HepG2 (cell line): ENCODE measurements at regions of chr15 and their contacts with region 1.

Region 1: GRCh38 chr15:94324117-94324826 is 92.9 kb downstream of the MCTP2 start:
- DNase-seq: peak; percentile 34
- ATAC-seq: peak; percentile 95
- H3K4me3 ChIP-seq: no peak overlapping the region
- H3K27ac ChIP-seq: no peak overlapping the region
- H3K4me1 ChIP-seq: no peaks in the 10 kb centered on the region; the same call in 1 of the 2 replicates
- H3K27me3 ChIP-seq: no peaks in the 10 kb centered on the region
- CTCF ChIP-seq: peak; percentile 93
- EP300 ChIP-seq: no peak
- POLR2A ChIP-seq: no peak
- RAD21 ChIP-seq: peak; percentile 89

Region 2: GRCh38 chr15:93030430-93031105 is 1293.7 kb before region 1 on chr15:
- CTCF ChIA-PET with region 1: no interaction called
- POLR2A ChIA-PET with region 1: no interaction called
- in situ Hi-C with region 1: no loop called
- intact Hi-C with region 1: loop called (anchors 2 kb)
- DNase-seq: peak; percentile 50
- ATAC-seq: peak; percentile 81
- H3K4me3 ChIP-seq: peak overlapping the region in 2 of 3 experiments; percentile 17 to 67; a peak in 2 of 6 replicates
- H3K27ac ChIP-seq: no peak overlapping the region
- H3K4me1 ChIP-seq: peaks cover 21% of the 10 kb centered on the region
- H3K27me3 ChIP-seq: 0 out of 5 replicates have a peak, but pooled peaks cover 0 to 8% of the 10 kb centered on the region in 2 experiments
- CTCF ChIP-seq: peak; percentile 90
- EP300 ChIP-seq: no peak
- POLR2A ChIP-seq: no peak
- RAD21 ChIP-seq: peak; percentile 81

Region 3: DNA sequence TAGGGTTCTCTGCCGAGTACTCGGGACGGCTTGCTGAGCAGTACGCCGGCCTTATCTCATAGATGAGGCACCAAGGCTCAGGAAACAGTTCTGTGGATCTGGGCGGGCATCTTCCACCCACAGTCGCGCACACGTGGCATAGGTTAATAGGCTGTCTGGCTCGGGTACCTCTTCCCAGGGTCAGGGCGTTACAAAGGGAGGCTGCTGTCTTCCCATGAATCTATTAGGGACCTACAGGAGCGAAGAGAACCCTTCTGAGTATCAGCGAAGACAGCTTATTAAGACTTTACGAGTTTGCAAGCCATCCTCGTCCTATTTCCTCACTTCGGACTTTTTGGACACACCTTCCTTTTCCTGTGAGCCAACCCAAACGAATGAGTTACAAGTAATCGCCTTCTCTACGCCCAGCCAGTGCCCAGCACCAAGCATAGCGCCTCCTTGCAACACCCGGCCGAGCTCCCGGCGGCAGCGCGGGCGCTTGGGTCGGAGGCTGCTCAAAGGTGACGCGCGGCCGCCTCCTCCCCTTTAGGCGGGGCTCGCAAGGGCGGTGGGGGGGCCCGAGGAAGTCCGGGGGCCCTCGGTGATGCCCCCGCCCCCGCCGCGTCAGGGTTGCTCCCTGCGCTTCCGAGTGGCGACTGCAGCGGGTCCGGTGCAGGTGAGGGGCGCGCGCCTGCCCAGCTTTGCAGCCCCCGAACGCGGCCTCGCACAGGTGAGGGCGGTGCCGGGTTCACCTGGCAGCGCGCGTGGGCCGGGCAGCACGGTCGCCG is 93.1 kb before region 1 on chr15 and contains the start of gene MCTP2:
- CTCF ChIA-PET with region 1: no interaction called
- POLR2A ChIA-PET with region 1: no interaction called
- in situ Hi-C with region 1: no loop called
- intact Hi-C with region 1: loop called (anchors 2 kb)
- DNase-seq: peak; percentile 62
- ATAC-seq: peak; percentile 96
- H3K4me3 ChIP-seq: peak within 1 kb of the TSS; percentile 68 to 74 (median 69)
- H3K27ac ChIP-seq: peak within 1 kb of the TSS; percentile 24
- H3K4me1 ChIP-seq: peaks cover 6% of the 10 kb centered on the region; the same call in 1 of the 2 replicates
- H3K27me3 ChIP-seq: no peaks in the 10 kb centered on the region; a peak in 1 of 5 replicates
- CTCF ChIP-seq: peak; percentile 41
- EP300 ChIP-seq: no peak
- POLR2A ChIP-seq: peak; percentile 17 to 52; a peak in 2 of 4 replicates
- RAD21 ChIP-seq: no peak
- total RNA-seq, gene MCTP2: 2.7 and 5.1 TPM in 2 replicates

Region 4: GRCh38 chr15:94336817-94337467 is 12.7 kb after region 1 on chr15:
- CTCF ChIA-PET with region 1: no interaction called
- POLR2A ChIA-PET with region 1: no interaction called
- in situ Hi-C with region 1: no loop called
- intact Hi-C with region 1: loop called (anchors 1 kb)
- DNase-seq: peak; percentile 86
- ATAC-seq: peak; percentile 96
- H3K4me3 ChIP-seq: no peak overlapping the region
- H3K27ac ChIP-seq: no peak overlapping the region
- H3K4me1 ChIP-seq: peaks cover 19% of the 10 kb centered on the region
- H3K27me3 ChIP-seq: no peaks in the 10 kb centered on the region; a peak in 1 of 5 replicates
- CTCF ChIP-seq: no peak
- EP300 ChIP-seq: peak in 1 of 2 experiments; percentile 39; a peak in 1 of 4 replicates
- POLR2A ChIP-seq: no peak
- RAD21 ChIP-seq: no peak

Region 5: DNA sequence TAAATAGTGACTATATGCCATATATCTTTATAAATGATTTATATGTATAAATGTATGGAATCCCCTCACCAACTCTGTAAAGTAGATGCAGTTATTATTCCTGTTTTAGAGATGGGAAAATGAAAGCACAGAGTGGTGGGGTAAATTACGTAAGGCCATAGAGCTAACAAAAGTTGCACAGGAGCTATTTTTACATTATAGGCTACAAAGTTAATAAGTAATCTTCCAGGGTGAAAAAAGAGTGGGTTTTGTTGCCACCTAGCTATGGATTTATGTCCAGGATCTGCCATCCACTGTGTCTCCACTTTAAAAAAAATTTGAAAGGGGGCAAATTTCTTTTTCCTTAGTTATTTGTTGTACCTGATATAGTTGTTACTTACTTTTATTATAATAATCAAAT is 142.8 kb after region 1 on chr15:
- CTCF ChIA-PET with region 1: no interaction called
- POLR2A ChIA-PET with region 1: no interaction called
- in situ Hi-C with region 1: no loop called
- intact Hi-C with region 1: loop called (anchors 1 kb)
- DNase-seq: peak; percentile 61
- ATAC-seq: peak; percentile 68
- H3K4me3 ChIP-seq: no peak overlapping the region; a peak in 1 of 6 replicates
- H3K27ac ChIP-seq: no peak overlapping the region
- H3K4me1 ChIP-seq: no peaks in the 10 kb centered on the region
- H3K27me3 ChIP-seq: no peaks in the 10 kb centered on the region
- CTCF ChIP-seq: peak; percentile 29; the same call in 1 of the 2 replicates
- EP300 ChIP-seq: no peak
- POLR2A ChIP-seq: no peak
- RAD21 ChIP-seq: no peak

Region 6: GRCh38 chr15:94761574-94761973 is 437.3 kb after region 1 on chr15:
- CTCF ChIA-PET with region 1: no interaction called
- POLR2A ChIA-PET with region 1: no interaction called
- in situ Hi-C with region 1: no loop called
- intact Hi-C with region 1: no loop called
- DNase-seq: no peak
- ATAC-seq: no peak
- H3K4me3 ChIP-seq: no peak overlapping the region
- H3K27ac ChIP-seq: no peak overlapping the region
- H3K4me1 ChIP-seq: no peaks in the 10 kb centered on the region
- H3K27me3 ChIP-seq: no peaks in the 10 kb centered on the region
- CTCF ChIP-seq: no peak
- EP300 ChIP-seq: no peak
- POLR2A ChIP-seq: no peak
- RAD21 ChIP-seq: no peak